Activated naive CD4-positive, alpha-beta T cell treated with anti-CD3 and anti-CD28 coated beads for 36 hours (primary cell): ENCODE measurements at regions of chr5 and their contacts with region 1.

Region 1: DNA sequence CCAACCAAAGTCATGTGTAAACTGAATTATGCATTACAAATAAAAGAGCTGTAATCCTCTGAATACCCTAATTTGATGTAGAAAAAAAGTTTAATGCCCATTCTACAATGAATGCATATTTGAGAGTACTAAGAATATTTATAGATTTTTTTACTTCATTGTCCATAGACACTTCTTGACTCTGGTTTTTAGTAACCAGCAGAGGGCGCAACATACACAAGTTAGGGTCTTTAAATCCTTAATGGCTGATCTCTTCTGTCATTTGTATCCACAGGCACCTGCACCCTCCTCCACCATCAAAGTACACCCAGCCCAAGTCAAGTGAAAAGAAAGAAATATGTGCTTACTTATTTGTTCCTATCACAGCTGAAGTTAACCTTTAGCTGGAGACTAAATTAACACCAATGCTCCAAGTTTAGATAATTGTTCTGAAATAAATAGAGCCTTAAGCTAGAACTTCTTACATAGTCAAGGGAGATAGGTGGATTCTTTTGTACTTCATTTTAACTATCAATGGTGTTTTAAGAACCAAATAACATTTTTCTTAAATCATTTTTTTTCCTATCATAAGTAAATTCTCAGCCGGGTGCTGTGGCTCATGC is 524.2 kb upstream of the DAB2 start:
- DNase-seq: peak; percentile 79
- H3K4me3 Mint-ChIP-seq: no peak overlapping the region
- H3K27ac Mint-ChIP-seq: no peak overlapping the region
- H3K4me1 Mint-ChIP-seq: peaks cover 5% of the 10 kb centered on the region
- H3K27me3 Mint-ChIP-seq: no peaks in the 10 kb centered on the region

Region 2: DNA sequence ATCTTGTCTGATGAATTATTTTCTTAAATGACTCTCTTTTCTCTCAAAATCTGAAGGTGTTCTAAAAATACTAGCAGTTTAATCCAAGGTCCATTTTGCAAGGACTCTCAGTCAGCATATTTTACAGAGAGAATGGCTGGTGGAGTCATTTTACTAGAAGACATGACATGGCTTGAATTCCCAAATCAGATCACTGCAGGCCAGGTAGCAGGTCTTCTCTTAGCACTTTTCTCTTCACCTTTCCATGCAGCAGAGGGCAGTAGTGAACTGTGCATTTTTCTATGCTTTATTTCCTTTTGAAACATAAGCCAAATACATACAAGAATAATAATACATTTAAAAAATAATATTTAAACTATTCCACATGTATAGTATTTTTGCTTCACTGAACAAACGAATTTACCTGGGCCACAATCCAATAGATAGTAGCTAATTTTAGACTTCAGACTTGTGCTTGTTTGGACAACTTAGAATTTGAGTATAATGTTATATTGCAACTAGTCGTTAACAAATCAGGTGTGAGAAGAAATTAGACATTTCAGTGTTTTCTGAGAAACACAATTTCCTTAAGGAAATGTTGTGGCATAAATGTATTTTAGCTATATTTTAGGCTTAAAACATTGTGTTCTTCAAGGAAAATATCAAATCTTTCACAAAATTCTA is 234.8 kb before region 1 on chr5:
- CTCF ChIA-PET with region 1: interaction called, 4 read pairs
- intact Hi-C with region 1: loop called (anchors 1 kb)
- DNase-seq: peak; percentile 66
- H3K4me3 Mint-ChIP-seq: no peak overlapping the region
- H3K27ac Mint-ChIP-seq: no peak overlapping the region
- H3K4me1 Mint-ChIP-seq: no peaks in the 10 kb centered on the region
- H3K27me3 Mint-ChIP-seq: no peaks in the 10 kb centered on the region

Region 3: DNA sequence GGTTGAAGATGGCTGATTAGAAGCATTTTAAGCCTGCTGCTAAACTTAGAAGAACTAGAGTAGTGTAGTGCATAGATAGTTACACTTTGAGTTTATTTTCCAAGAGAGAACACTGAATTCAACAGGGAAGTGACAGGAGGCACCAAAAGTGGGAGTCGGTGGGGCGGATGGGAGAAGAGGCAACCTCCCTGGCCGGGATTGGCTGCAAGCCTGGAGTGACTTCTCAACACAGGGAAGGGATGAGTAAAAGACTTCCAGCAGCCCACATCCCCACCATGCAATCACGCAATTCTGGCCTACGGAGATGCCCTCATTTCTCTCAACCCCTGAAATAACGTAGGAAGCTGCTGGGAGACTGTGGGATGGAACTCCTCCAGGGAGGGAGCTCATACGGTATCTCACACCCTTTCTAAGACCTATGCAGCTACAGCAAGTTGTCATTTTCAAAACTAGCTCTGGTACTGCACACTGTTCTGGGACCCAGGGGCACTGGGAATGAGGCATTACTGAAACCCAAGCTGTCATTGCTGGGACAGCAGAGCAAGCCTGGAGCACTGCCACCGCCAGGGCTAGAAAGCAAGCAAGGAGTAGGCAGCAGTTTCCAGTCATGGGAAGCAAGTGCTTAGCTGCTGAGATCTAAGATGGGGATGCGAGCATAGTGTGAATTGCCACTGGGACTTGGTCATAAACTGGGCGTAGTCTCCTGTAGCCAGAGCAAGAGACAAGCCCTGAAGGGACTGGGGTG is 399.2 kb after region 1 on chr5:
- CTCF ChIA-PET with region 1: no interaction called
- intact Hi-C with region 1: loop called (anchors 10 kb)
- DNase-seq: no peak
- H3K4me3 Mint-ChIP-seq: no peak overlapping the region
- H3K27ac Mint-ChIP-seq: no peak overlapping the region
- H3K4me1 Mint-ChIP-seq: no peaks in the 10 kb centered on the region
- H3K27me3 Mint-ChIP-seq: no peaks in the 10 kb centered on the region

Region 4: DNA sequence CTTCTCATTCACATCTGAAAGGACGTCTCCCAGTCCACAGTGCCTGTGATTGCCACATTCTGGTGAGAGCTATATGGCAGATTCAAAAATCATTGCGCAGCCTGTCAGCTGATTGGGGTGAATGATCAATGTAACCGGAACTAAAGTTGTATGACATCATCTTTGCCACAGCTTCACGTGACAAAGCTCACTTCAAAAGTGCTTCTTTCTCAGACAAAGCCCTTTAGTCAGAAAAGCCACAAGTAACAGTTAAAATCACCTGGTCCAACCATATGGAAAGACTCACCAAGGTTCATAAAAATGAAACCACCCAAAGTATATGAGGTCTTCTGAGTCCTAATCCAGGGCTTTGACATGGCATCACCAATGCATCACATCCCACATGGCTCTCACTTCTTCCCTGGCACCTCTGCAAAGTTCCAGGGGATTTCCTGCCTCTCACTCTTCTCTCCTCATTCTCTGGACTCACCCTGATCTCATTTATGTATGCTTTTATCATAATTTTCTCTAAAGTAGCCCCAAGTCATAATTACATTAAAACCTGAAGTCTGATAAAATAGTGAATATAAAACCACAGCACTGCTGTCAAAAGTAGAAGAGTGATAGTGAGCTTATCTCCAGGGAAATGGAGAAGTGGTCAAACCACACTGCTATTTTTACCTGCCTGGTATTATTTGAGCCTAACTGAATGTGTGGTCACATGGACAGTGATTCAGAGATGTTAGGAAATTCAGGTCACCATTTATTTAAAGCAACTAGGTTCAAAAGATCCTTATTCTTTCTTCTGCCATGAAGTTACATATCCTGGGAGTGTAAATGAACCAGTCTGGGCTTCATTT is 537.7 kb after region 1 on chr5:
- CTCF ChIA-PET with region 1: no interaction called
- intact Hi-C with region 1: loop called (anchors 1 kb)
- DNase-seq: peak; percentile 85
- H3K4me3 Mint-ChIP-seq: peak overlapping the region; percentile 1
- H3K27ac Mint-ChIP-seq: peak overlapping the region; percentile 92
- H3K4me1 Mint-ChIP-seq: peaks cover 83% of the 10 kb centered on the region
- H3K27me3 Mint-ChIP-seq: no peaks in the 10 kb centered on the region

Region 5: DNA sequence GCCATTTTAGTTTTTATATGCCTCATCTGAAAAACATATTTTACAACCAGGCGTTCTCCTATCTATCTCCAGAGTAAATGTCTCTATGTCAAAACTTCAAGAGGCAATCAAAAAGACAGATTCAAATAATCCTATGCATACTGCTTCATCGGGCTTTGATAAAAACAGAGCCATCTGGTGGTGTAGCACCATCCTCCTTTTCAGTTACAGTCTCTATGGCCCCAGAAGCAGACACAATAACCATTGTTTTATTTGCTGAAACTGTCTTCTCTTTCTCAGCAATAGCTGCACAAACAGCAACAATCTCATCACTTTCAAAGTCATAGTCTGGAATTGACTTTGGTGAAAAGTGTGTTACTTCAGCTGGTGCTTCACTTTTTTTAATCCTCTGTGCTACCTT is 767.0 kb after region 1 on chr5:
- CTCF ChIA-PET with region 1: no interaction called
- intact Hi-C with region 1: loop called (anchors 1 kb)
- DNase-seq: no peak
- H3K4me3 Mint-ChIP-seq: no peak overlapping the region
- H3K27ac Mint-ChIP-seq: no peak overlapping the region
- H3K4me1 Mint-ChIP-seq: peaks cover 13% of the 10 kb centered on the region
- H3K27me3 Mint-ChIP-seq: no peaks in the 10 kb centered on the region

Region 6: GRCh38 chr5:40798012-40798855 is 849.3 kb after region 1 on chr5 and contains the start of gene PRKAA1:
- CTCF ChIA-PET with region 1: no interaction called
- intact Hi-C with region 1: loop called (anchors 1 kb)
- DNase-seq: peak; percentile 85
- H3K4me3 Mint-ChIP-seq: peak within 1 kb of the TSS; percentile 88
- H3K27ac Mint-ChIP-seq: peak within 1 kb of the TSS; percentile 85
- H3K4me1 Mint-ChIP-seq: peaks cover 41% of the 10 kb centered on the region
- H3K27me3 Mint-ChIP-seq: peaks cover 2% of the 10 kb centered on the region
- total RNA-seq, gene PRKAA1: 52.6 to 58.6 TPM